HepG2 (cell line): ENCODE measurements at regions of chr19 and their contacts with region 1.

Region 1: DNA sequence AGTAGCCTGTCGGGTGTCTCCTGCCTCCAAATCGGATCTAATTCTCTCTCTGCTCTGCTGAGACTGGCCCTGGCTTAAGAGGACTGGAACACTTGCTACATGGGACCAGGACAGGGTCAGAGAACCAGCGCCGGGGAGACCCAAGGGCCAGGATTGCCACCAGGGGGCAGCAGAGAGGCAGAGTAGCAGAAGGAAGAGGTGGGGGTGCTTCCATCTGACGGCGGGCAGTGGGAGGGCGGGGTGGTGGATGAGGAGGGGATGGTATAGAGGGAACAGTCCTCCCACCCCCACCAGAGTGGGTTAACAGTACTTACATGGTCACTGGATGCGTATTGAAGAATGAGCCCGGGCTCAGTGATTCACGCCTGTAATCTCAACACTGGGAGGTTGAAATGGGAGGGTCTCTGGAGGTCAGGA is 11.9 kb downstream of the SELENOW start:
- DNase-seq: peak; percentile 65
- ATAC-seq: peak; percentile 91
- H3K4me3 ChIP-seq: no peak overlapping the region
- H3K27ac ChIP-seq: no peak overlapping the region
- H3K4me1 ChIP-seq: no peaks in the 10 kb centered on the region
- H3K27me3 ChIP-seq: no peaks in the 10 kb centered on the region
- CTCF ChIP-seq: peak; percentile 83
- EP300 ChIP-seq: no peak
- POLR2A ChIP-seq: no peak
- RAD21 ChIP-seq: no peak

Region 2: GRCh38 chr19:47719047-47719859 is 71.2 kb before region 1 on chr19:
- CTCF ChIA-PET with region 1: no interaction called
- POLR2A ChIA-PET with region 1: no interaction called
- in situ Hi-C with region 1: no loop called
- intact Hi-C with region 1: no loop called
- DNase-seq: peak; percentile 44
- ATAC-seq: peak; percentile 65
- H3K4me3 ChIP-seq: peak overlapping the region; percentile 20 to 68 (median 51); a peak in 5 of 6 replicates
- H3K27ac ChIP-seq: no peak overlapping the region
- H3K4me1 ChIP-seq: peaks cover 51% of the 10 kb centered on the region
- H3K27me3 ChIP-seq: peaks cover 0 to 9% of the 10 kb centered on the region in 2 experiments; a peak in 3 of 5 replicates
- CTCF ChIP-seq: no peak
- EP300 ChIP-seq: no peak
- POLR2A ChIP-seq: no peak
- RAD21 ChIP-seq: no peak

Region 3: DNA sequence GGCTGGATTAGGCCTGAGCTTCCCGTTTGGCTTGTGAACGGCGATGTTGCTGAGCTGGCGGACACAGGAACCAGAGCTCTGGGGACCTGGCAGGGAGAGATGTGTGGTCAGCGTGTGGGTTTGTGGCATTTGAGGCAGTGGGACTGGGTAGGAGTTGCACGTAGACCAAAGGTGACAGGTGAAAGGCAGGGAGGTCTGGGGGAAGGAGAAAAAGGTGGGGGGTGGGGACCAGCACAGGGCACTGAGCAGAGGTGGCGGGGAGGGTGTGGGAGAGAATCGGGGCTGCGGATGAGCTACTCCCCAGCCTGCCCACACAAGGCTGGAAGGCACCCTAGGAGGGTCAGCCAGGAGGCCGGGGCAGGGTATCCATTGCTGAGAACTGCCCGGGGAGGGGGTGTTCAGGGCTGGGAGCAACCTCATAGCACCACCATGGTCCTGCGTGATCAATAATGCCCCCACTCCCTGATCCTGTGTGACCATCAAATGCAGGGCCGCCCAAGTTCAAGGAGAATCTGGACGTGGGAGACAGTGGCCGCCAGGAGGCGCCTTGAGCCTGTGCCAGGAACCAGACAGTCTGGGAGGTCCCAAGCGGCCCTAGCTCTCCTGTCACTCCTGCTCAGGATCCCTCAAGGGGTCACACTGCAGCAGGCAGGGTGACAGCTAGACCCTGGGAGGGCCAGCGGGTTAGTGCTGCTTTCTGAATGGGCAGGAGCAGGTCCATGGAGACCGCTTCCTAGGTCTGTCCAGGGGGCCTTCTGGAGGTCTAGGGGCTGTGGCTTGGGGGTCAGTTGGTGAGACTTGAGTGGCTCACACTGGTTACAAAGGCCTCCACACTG is 24.7 kb before region 1 on chr19:
- CTCF ChIA-PET with region 1: interaction called, 47 read pairs
- POLR2A ChIA-PET with region 1: no interaction called
- in situ Hi-C with region 1: no loop called
- intact Hi-C with region 1: loop called (anchors 1 kb)
- DNase-seq: peak; percentile 52
- ATAC-seq: peak; percentile 77
- H3K4me3 ChIP-seq: peak overlapping the region in 1 of 3 experiments; percentile 51; a peak in 2 of 6 replicates
- H3K27ac ChIP-seq: no peak overlapping the region
- H3K4me1 ChIP-seq: peaks cover 41% of the 10 kb centered on the region
- H3K27me3 ChIP-seq: no peaks in the 10 kb centered on the region
- CTCF ChIP-seq: peak; percentile 95
- EP300 ChIP-seq: no peak
- POLR2A ChIP-seq: no peak
- RAD21 ChIP-seq: peak; percentile 87